Aorta (tissue), 5 donors: ENCODE measurements at regions of chr13 and their contacts with region 1.

Region 1: GRCh38 chr13:45367358-45367757 is 26.4 kb upstream of the TPT1 start:
- DNase-seq: peak; percentile 80 to 81
- ATAC-seq: no peak
- H3K4me3 ChIP-seq: no peak overlapping the region
- H3K27ac ChIP-seq: no peak overlapping the region
- H3K4me1 ChIP-seq: no peaks in the 10 kb centered on the region
- H3K27me3 ChIP-seq: no peaks in the 10 kb centered on the region

Region 2: DNA sequence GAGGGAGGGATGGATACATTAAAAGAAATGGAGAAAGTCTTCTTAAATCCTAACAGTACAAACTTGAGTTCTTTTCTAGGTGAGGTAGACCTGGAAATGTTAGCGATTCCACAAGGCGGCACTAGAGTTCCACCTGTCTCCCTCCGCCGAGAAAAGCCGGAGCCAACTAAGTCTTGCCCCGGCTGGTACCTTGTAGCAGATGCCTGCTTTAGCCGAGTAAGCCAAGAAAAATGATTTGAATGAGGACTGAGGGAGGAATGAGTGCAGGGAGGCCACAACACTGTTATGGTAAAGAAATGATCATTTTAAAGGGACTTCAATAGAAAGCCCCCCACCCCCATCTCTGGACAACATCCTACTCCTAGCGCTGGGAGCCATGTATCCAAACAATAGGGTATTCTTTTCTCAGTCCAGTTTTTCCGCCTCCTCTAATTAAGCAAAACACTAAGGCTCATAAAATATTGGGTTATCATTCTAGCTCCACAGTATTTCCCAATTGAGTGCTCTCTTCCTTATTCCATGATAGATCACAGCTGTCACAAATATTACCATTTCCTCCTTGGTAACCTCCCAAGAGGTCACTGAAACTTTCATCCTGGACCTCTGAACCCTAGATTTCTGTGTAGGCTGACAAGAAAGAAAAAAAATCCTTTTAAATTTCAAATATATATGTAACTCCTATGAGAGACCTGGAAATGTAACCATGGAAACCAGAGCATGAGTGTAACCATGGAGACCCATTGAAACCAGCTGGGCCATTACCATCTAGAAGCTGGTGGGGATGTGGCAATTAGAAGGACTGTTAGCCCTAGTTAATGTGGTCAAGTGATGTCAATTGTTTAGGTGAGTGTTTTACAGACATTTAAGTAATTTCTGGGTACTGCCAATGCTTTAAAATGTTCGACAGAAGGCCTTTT is 319.7 kb before region 1 on chr13:
- intact Hi-C with region 1: loop called in 1 of 2 experiments (anchors 10 kb)
- DNase-seq: peak; percentile 81 to 84
- ATAC-seq: peak; percentile 91
- H3K4me3 ChIP-seq: peak overlapping the region in 1 of 2 donors; percentile 40
- H3K27ac ChIP-seq: no peak overlapping the region
- H3K4me1 ChIP-seq: no peaks in the 10 kb centered on the region
- H3K27me3 ChIP-seq: no peaks in the 10 kb centered on the region

Region 3: DNA sequence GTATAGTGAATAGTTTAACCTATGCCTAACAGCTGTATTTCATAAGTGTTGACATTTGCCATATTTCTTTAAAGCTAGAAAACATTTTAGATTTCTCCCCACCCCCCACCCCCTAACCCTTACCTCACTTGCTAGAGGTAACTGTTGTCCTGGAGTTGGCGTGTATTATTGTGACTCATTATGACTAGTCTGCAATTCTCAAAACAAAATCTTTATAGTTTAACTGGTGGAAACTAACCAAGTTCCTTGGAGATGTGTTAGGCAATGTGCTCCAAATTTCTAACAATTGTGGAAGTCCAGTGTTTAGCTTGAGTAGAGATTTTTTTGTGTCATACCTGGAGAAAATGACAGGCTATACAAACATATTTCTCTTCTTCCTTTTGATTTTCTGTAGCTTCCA is 204.5 kb before region 1 on chr13:
- intact Hi-C with region 1: no loop called
- DNase-seq: no peak
- ATAC-seq: no peak
- H3K4me3 ChIP-seq: no peak overlapping the region
- H3K27ac ChIP-seq: no peak overlapping the region
- H3K4me1 ChIP-seq: no peaks in the 10 kb centered on the region
- H3K27me3 ChIP-seq: no peaks in the 10 kb centered on the region

Region 4: DNA sequence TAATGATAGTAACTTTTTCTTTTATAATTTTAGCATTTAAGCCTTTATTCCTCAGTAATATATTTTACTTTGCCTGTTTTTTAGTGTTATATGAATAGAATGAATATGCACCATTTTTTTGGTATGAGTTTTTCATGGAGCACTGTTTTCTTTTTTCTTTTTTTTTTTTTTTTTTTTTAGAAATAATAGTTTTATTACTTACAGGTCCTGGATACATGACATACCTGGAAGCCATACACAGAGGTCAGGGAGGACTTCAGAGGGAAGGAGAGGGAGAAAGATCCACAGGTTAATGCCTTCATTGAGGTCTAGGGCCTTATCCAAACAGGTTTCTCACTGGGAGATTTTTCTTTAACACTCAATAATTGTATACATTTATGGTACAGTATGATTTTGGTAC is 192.9 kb before region 1 on chr13:
- intact Hi-C with region 1: no loop called
- DNase-seq: no peak
- ATAC-seq: no peak
- H3K4me3 ChIP-seq: no peak overlapping the region
- H3K27ac ChIP-seq: no peak overlapping the region
- H3K4me1 ChIP-seq: peaks cover 0 to 3% of the 10 kb centered on the region in 2 donors
- H3K27me3 ChIP-seq: no peaks in the 10 kb centered on the region

Region 5: DNA sequence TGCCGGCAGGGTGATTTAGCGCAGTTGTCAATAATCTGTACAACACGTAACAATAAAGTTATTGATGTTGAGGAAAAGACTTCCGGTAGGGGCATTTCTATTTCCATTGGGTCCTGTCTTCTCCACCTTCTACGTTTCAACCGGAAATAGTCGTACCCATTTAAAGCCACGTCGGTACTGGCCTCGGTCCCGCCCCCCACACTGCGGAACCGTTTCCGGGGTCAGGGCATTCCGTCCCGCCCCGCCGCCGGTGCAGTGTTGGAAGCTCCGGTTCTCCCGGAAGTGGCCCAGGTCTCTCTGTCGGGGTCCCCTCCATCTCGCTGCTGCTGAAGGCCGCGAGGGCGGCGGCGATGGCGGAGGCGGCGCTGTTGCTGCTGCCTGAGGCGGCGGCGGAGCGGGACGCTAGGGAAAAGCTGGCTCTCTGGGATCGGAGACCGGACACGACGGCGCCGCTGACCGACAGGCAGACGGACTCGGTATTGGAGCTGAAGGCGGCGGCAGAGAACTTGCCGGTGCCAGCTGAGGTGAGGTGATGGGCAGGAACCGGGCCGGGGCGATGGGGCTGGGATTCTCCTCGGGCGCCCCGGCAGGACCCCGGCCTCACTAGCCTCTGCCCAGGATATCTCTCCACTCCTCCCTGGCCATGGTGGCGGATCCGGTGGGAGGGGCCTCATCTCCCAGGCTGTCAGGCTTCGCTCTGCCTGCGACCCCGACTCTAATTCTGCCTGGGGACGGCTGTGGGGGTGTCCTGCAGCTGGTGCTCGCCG is 97.5 kb after region 1 on chr13 and contains the start of gene COG3:
- intact Hi-C with region 1: loop called in 1 of 2 experiments (anchors 10 kb)
- DNase-seq: peak; percentile 95 to 98
- ATAC-seq: peak; percentile 99
- H3K4me3 ChIP-seq: peak within 1 kb of the TSS; percentile 63 to 92
- H3K27ac ChIP-seq: peak within 1 kb of the TSS; percentile 57 to 73
- H3K4me1 ChIP-seq: peaks cover 0 to 3% of the 10 kb centered on the region in 2 donors
- H3K27me3 ChIP-seq: no peaks in the 10 kb centered on the region
- total RNA-seq, gene COG3: 34.3 to 39.3 TPM

Region 6: DNA sequence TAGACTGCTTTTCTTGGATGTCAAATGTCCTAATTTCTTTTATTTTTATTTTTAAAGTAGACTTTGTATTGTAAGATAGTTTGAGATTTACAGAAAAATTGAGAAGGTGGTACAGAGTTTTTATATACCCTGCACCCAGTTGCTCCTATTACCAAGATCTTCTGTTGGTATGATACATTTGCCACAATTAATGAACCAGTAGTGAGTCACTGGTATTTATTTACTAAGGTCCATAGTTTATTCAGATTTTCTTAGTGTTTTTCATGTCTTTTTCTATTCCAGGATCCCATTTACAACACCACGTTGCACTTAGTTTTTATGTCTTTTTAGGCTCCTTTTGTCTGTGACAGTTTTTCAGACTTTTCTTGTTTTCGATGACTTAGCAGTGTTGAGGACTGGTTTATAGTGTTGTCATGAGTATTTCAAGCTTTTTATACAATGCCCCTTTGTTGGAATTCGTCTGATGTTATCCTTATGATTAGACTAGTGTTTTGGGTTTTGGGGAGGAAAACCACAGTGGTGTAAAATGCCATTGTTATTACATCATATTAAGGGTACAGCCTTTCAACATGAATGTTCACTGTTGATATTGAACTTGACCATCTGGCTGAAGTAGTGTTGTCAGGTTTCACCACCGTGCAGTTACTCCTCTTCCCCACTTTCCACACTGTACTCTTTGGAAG is 133.3 kb after region 1 on chr13:
- intact Hi-C with region 1: loop called in 1 of 2 experiments (anchors 10 kb)
- DNase-seq: no peak
- ATAC-seq: no peak
- H3K4me3 ChIP-seq: no peak overlapping the region
- H3K27ac ChIP-seq: no peak overlapping the region
- H3K4me1 ChIP-seq: peaks cover 1 to 3% of the 10 kb centered on the region in 2 donors
- H3K27me3 ChIP-seq: no peaks in the 10 kb centered on the region